ENCODE measurements at regions of chr1 and their contacts with region 1.

Region 1: DNA sequence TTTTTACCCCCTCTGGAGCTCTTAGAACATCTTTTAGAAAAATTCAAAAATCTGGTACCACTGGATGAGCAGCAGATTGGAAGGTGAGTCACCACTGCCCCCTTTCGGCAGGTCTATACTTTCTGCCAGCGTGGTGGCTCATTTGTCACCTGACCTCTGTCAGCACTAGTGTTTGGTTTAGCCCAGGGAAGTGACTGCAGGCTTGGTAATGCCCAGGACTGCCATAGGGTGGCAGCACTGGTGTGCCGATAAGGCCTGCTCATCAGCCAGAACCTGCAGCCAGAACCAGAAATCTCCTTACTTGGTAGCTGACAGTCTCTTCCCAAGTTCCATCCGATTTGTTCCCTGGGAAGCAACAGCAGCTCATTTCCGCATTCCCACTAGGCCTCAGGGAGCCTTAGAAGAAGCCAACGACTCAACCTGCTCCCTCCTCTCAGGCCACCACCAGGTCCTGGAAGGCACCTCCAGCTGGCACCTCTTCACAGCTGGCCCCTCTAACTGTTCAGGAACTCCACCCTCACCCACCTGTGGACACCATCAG is 6.8 kb downstream of the SMIM12 start:
- DNase-seq: peak; percentile 86 to 95 (median 90)
- ATAC-seq: peak; percentile 95 to 100 (median 99)
- H3K4me3 ChIP-seq: no peak overlapping the region
- H3K27ac ChIP-seq: no peak overlapping the region
- H3K4me1 ChIP-seq: peaks cover 0 to 8% (median 3%) of the 10 kb centered on the region in 3 donors
- H3K27me3 ChIP-seq: no peaks in the 10 kb centered on the region
- CTCF ChIP-seq: peak; percentile 93 to 98 (median 95)

Region 2: GRCh38 chr1:34786521-34787325 is 66.0 kb before region 1 on chr1:
- intact Hi-C with region 1: loop called in 2 of 3 experiments (anchors 5 kb)
- DNase-seq: peak in 5 of 6 donors; percentile 55 to 81 (median 72)
- ATAC-seq: peak; percentile 83 to 95 (median 90)
- H3K4me3 ChIP-seq: no peak overlapping the region
- H3K27ac ChIP-seq: no peak overlapping the region
- H3K4me1 ChIP-seq: peaks cover 0 to 7% (median 2%) of the 10 kb centered on the region in 3 donors
- H3K27me3 ChIP-seq: no peaks in the 10 kb centered on the region
- CTCF ChIP-seq: peak; percentile 69 to 81 (median 76)

Region 3: GRCh38 chr1:34792868-34793727 is 59.6 kb before region 1 on chr1 and contains the start of gene GJA4:
- intact Hi-C with region 1: loop called in 2 of 3 experiments (anchors 5 kb)
- DNase-seq: no peak
- ATAC-seq: peak in 3 of 4 donors; percentile 21 to 60 (median 59)
- H3K4me3 ChIP-seq: peak within 1 kb of the TSS in 2 of 4 donors; percentile 24 to 30
- H3K27ac ChIP-seq: no peak within 1 kb of the TSS
- H3K4me1 ChIP-seq: no peaks in the 10 kb centered on the region
- H3K27me3 ChIP-seq: no peaks in the 10 kb centered on the region
- CTCF ChIP-seq: no peak
- total RNA-seq, gene GJA4: 1.1 to 6.7 (median 1.4) TPM

Region 4: GRCh38 chr1:35085421-35085820 is 232.7 kb after region 1 on chr1:
- intact Hi-C with region 1: no loop called
- DNase-seq: no peak
- ATAC-seq: no peak
- H3K4me3 ChIP-seq: no peak overlapping the region
- H3K27ac ChIP-seq: no peak overlapping the region
- H3K4me1 ChIP-seq: peaks cover 0 to 1% (median 0%) of the 10 kb centered on the region in 3 donors
- H3K27me3 ChIP-seq: no peaks in the 10 kb centered on the region
- CTCF ChIP-seq: no peak

Region 5: DNA sequence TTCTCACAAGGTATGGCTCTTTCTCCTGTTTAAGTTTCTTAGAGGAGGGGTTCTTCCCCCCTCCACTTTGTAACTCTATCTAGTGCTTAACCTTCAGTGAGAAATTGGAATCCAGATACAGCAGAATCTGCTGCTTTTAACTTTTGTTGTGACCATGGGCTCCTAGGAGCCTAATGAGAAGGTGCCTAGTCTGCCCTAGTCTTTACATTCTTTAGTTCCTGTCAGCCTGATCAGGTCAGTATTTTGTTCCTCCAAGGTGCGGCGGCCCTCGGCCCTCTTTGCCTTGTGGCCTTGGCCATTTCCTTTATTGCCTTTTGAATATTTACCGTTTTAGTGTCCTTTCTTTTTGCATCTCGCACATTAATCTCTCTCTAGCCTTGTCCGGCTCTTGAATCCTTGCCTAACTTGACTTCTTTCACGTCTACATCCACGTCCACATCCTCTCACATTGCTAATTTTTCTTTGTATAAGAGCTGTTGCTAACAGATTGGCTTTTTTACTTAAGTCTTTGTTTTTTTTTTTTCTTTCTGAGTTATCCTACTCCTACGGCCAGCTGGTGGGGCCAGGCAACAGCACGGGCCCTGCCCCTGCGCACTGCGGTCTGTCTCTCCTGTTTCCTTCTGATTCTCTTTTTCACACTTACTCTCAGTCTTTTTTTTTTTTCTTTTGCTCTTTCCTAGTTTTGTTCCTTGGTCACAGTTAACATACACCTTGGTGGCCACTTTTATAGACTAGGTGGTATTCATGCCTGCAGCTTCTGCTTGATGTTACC is 291.2 kb after region 1 on chr1:
- intact Hi-C with region 1: no loop called
- DNase-seq: no peak
- ATAC-seq: peak; percentile 39 to 62 (median 57)
- H3K4me3 ChIP-seq: no peak overlapping the region
- H3K27ac ChIP-seq: peak overlapping the region in 2 of 4 donors; percentile 6 to 60
- H3K4me1 ChIP-seq: peaks cover 11 to 13% (median 13%) of the 10 kb centered on the region in 3 donors
- H3K27me3 ChIP-seq: no peaks in the 10 kb centered on the region
- CTCF ChIP-seq: no peak